ENCODE measurements at regions of chr2 and their contacts with region 1.

Region 1: DNA sequence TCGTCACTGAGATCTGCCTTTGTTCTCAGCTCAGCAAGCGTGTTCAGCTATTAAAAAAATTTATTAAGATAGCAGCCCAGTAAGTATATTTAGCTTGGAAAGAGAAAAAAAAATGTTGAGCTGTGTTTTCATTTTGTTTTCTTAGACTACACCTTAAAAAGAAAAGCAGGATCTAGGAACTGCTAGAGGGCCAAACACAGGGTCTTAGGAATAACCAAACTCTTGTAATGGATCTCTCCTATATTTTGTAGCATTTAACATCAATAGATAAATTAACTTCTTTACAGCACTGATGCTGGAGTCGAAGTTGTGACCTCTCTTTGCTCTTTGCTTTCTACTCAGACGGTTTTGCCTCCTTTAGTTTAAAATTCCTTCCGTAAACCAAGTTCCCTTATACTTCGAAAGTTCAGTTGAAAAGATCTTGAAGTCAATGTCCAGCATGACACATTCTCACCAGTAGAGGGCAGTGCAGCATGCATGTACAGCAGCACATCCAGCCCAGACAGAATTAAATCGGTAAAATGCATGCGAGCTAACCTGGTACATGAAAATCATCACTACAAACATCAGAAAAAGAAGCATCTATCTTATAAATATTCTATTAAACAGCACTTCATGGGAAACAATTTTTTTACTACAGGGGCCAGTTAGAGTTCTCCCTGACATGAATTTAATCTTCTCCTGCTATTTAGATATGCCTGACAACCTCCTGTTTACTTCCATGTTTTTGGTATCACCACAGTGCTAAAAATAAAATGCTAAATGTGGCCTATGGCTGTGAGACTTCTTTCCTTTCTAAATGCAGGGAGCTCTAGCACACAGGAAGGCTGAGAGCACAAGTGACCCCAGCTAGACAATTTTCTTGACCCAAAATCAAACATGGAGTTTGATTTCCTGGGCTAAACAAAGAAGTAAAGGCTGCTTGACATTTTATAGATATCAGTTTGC is 48.2 kb upstream of the MAP3K20 start:
- DNase-seq: no peak
- H3K4me3 ChIP-seq: no peak overlapping the region
- CTCF ChIP-seq: peak; percentile 76

Region 2: DNA sequence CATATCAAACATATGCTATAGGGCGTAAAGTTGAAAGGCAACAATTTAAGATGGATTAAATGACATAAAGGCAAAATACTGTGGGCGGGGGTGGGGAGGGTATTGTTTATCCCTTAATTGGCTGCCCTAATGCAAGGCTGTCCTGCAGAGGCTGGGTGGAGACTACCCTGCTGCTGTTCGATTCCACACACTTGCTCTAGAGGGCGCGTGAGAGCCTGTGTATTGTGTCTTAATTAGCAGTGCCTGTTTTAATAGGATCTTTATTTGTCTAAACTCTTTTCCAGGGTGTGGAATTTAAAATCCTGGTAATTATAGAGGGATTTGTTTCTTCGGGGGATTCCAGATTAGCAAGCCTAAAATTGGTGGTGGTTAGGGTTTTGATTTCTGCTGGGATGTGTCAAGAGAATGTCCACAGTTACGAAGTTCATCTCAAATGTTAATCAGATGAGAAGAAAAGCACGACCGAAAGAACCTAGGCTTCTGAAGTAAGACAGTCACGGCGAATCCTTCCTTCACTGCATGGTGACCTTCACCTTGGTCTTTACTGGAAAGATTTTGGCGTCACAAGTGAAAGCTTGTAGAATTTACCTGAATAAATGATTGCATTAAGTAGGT is 55.3 kb before region 1 on chr2:
- CTCF ChIA-PET with region 1: interaction called, 38 read pairs
- POLR2A ChIA-PET with region 1: no interaction called
- DNase-seq: no peak
- H3K4me3 ChIP-seq: no peak overlapping the region
- CTCF ChIP-seq: peak; percentile 85

Region 3: DNA sequence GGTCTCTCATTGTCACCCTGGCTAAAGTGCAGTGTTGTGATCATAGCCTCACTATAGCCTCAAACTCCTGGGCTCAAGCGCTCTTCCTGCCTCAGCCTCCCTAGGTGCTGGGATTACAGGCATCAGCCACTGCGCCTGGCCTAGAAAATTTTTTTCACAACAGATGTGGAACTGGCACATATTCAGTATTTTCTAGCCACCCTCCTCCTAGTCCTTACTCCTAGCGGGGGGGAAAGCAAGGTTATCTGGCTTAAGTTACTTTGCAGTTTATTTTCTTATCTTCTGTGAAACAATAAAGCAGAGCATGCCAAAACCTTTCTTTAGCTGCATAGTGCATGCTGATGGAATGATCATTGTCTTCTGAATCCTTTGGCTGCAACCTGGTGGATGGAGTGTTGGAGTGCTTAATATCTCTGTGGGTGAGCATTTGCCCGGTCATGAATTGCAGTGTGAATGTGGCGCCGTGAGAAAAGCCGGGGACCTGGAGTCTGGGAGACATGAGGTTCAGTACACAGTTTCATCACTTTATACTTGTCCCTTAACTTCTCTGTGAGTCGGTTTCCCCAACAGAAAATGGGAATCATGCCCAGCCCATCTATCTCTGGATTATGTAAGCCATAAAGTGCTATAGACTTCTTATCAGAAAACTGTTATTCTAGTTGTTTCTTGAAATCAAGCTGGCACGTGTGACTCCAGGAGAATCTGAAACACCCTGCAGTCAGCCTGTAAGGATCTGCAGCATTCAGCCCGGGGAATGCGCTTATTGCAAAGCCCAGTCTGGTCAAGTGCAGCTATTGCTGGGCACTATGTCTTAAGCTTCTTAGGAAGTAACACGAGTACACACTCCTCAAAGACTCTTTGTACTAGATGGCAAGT is 10.0 kb after region 1 on chr2:
- CTCF ChIA-PET with region 1: interaction called, 33 read pairs
- POLR2A ChIA-PET with region 1: no interaction called
- DNase-seq: no peak
- H3K4me3 ChIP-seq: no peak overlapping the region
- CTCF ChIP-seq: no peak

Region 4: GRCh38 chr2:173101687-173102086 is 74.2 kb after region 1 on chr2:
- CTCF ChIA-PET with region 1: interaction called, 14 read pairs
- POLR2A ChIA-PET with region 1: no interaction called
- DNase-seq: no peak
- H3K4me3 ChIP-seq: no peak overlapping the region
- CTCF ChIP-seq: no peak

Region 5: GRCh38 chr2:173187911-173188788 is 160.7 kb after region 1 on chr2:
- CTCF ChIA-PET with region 1: interaction called, 19 read pairs
- POLR2A ChIA-PET with region 1: no interaction called
- DNase-seq: no peak
- H3K4me3 ChIP-seq: no peak overlapping the region
- CTCF ChIP-seq: no peak

Region 6: DNA sequence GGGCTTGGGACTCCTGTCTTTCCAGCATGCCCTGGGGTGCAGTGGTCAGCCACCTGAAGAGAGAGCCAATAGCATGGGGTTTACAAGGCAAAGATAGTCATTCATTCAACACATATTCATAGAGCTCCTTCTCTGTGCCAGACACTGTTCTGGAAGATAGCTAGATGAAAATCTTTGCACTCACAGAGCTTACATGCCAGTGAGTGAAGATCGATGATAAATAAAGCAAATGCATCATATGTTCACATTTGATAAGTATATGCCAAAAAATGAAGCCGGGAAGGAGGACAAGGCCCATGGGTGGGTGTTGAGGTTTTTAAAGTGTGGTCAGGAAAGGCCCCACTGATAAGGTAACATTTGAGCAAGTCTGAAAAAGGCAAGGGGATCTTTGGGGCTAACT is 196.4 kb after region 1 on chr2:
- CTCF ChIA-PET with region 1: interaction called, 678 read pairs
- POLR2A ChIA-PET with region 1: no interaction called
- DNase-seq: no peak
- H3K4me3 ChIP-seq: no peak overlapping the region
- CTCF ChIP-seq: no peak